Heart left ventricle (tissue), 16 donors: ENCODE measurements at regions of chr12 and their contacts with region 1.

Region 1: GRCh38 chr12:49945394-49946080 is 5.0 kb upstream of the AQP2 start:
- DNase-seq: peak; percentile 73 to 92 (median 85)
- ATAC-seq: peak; percentile 92 to 97 (median 96)
- H3K4me3 ChIP-seq: peak overlapping the region in 9 of 12 donors; percentile 19 to 51 (median 39)
- H3K27ac ChIP-seq: peak overlapping the region in 6 of 12 donors; percentile 18 to 63 (median 45)
- H3K4me1 ChIP-seq: peaks cover 0 to 13% (median 5%) of the 10 kb centered on the region in 12 donors
- H3K27me3 ChIP-seq: peaks cover 0 to 2% (median 0%) of the 10 kb centered on the region in 9 donors
- CTCF ChIP-seq: peak; percentile 86 to 98 (median 90)
- POLR2A ChIP-seq: no peak

Region 2: GRCh38 chr12:49866859-49867579 is 78.5 kb before region 1 on chr12:
- intact Hi-C with region 1: loop called in 7 of 10 experiments (anchors 1 to 10 kb)
- DNase-seq: peak; percentile 67 to 79 (median 73)
- ATAC-seq: peak in 2 of 4 donors; percentile 17
- H3K4me3 ChIP-seq: no peak overlapping the region
- H3K27ac ChIP-seq: no peak overlapping the region
- H3K4me1 ChIP-seq: peaks cover 4 to 37% (median 29%) of the 10 kb centered on the region in 12 donors
- H3K27me3 ChIP-seq: peaks cover 0 to 6% (median 0%) of the 10 kb centered on the region in 9 donors
- CTCF ChIP-seq: peak; percentile 94 to 99 (median 98)
- POLR2A ChIP-seq: no peak

Region 3: GRCh38 chr12:49872781-49873181 is 72.8 kb before region 1 on chr12:
- intact Hi-C with region 1: loop called in 7 of 10 experiments (anchors 1 to 10 kb)
- DNase-seq: peak in 1 of 5 donors; percentile 49
- ATAC-seq: no peak
- H3K4me3 ChIP-seq: no peak overlapping the region
- H3K27ac ChIP-seq: no peak overlapping the region
- H3K4me1 ChIP-seq: peaks cover 4 to 37% (median 23%) of the 10 kb centered on the region in 12 donors
- H3K27me3 ChIP-seq: no peaks in the 10 kb centered on the region
- CTCF ChIP-seq: no peak
- POLR2A ChIP-seq: no peak

Region 4: GRCh38 chr12:50070314-50071060 is 125.0 kb after region 1 on chr12:
- intact Hi-C with region 1: no loop called
- DNase-seq: peak; percentile 81 to 85 (median 82)
- ATAC-seq: peak; percentile 66 to 80 (median 76)
- H3K4me3 ChIP-seq: no peak overlapping the region
- H3K27ac ChIP-seq: peak overlapping the region in 3 of 12 donors; percentile 8 to 39 (median 14)
- H3K4me1 ChIP-seq: peaks cover 0 to 15% (median 3%) of the 10 kb centered on the region in 12 donors
- H3K27me3 ChIP-seq: no peaks in the 10 kb centered on the region
- CTCF ChIP-seq: peak; percentile 90 to 96 (median 93)
- POLR2A ChIP-seq: no peak

Region 5: GRCh38 chr12:50084775-50085614 is 139.5 kb after region 1 on chr12 and contains the start of gene SMARCD1:
- intact Hi-C with region 1: no loop called
- DNase-seq: peak; percentile 92 to 97 (median 95)
- ATAC-seq: peak; percentile 95 to 97 (median 96)
- H3K4me3 ChIP-seq: peak within 1 kb of the TSS; percentile 80 to 99 (median 94)
- H3K27ac ChIP-seq: peak within 1 kb of the TSS; percentile 90 to 100 (median 98)
- H3K4me1 ChIP-seq: peaks cover 0 to 29% (median 14%) of the 10 kb centered on the region in 12 donors
- H3K27me3 ChIP-seq: no peaks in the 10 kb centered on the region
- CTCF ChIP-seq: peak in 10 of 12 donors; percentile 19 to 83 (median 66)
- POLR2A ChIP-seq: no peak
- total RNA-seq, gene SMARCD1: 13.6 to 35.7 (median 22.0) TPM

Region 6: GRCh38 chr12:50222275-50222795 is 276.8 kb after region 1 on chr12:
- intact Hi-C with region 1: no loop called
- DNase-seq: peak in 4 of 5 donors; percentile 45 to 62 (median 56)
- ATAC-seq: peak; percentile 71 to 91 (median 89)
- H3K4me3 ChIP-seq: peak overlapping the region; percentile 5 to 64 (median 50)
- H3K27ac ChIP-seq: peak overlapping the region; percentile 37 to 88 (median 74)
- H3K4me1 ChIP-seq: peaks cover 0 to 45% (median 12%) of the 10 kb centered on the region in 12 donors
- H3K27me3 ChIP-seq: no peaks in the 10 kb centered on the region
- CTCF ChIP-seq: peak in 8 of 12 donors; percentile 7 to 54 (median 31)
- POLR2A ChIP-seq: peak in 1 of 2 donors; percentile 19